IMR-90 (cell line): ENCODE measurements at regions of chr16 and their contacts with region 1.

Region 1: DNA sequence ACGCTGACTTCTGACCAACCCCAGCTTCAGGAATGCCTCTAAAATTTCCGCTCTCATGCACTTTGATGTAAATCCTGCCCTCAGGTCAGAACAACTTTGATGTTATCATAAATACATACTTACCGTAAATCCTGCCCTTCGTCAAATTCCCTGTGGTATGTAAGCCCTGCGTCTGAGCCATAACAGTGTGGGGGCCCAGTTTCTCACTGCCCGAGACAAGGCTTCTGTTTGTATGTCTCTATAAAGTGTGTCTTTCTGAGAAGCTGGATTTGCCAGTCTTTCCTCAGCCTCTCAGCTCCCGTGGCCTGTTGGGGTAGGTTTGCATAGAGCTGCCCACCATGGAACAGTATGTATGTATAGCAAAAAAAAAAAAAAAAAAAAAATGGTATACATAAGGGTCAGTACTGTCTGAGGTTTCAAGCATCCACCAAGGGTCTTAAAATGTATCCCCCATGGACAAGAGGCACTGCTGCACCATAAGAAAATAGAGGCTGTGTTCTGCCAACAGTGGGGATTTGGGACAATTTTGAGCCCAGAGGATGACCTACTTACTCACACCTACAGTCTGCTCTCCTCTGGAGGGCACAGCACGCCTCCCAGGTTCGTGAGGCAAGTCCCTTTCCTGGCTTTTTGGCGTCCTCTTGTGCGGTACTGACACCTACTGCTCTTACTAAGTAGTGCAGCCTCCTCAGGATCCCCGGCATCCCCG is 17.5 kb downstream of the PRMT7 start:
- DNase-seq: peak; percentile 83
- ATAC-seq: peak; percentile 86
- H3K4me3 ChIP-seq: no peak overlapping the region
- H3K27ac ChIP-seq: no peak overlapping the region
- H3K4me1 ChIP-seq: peaks cover 10% of the 10 kb centered on the region
- H3K27me3 ChIP-seq: no peaks in the 10 kb centered on the region
- CTCF ChIP-seq: peak; percentile 94
- POLR2A ChIP-seq: no peak; the same call in 1 of the 2 replicates
- RAD21 ChIP-seq: peak; percentile 92

Region 2: GRCh38 chr16:68085259-68086071 is 242.8 kb before region 1 on chr16 and contains the start of gene NFATC3:
- CTCF ChIA-PET with region 1: no interaction called
- POLR2A ChIA-PET with region 1: no interaction called
- dilution Hi-C with region 1: no loop called
- in situ Hi-C with region 1: no loop called
- intact Hi-C with region 1: loop called (anchors 10 kb)
- DNase-seq: peak; percentile 94
- ATAC-seq: peak; percentile 89
- H3K4me3 ChIP-seq: peak within 1 kb of the TSS; percentile 99
- H3K27ac ChIP-seq: peak within 1 kb of the TSS; percentile 95
- H3K4me1 ChIP-seq: peaks cover 12% of the 10 kb centered on the region
- H3K27me3 ChIP-seq: no peaks in the 10 kb centered on the region
- CTCF ChIP-seq: no peak
- POLR2A ChIP-seq: 0 out of 2 replicates have a peak, but pooled peaks have one; percentile 43
- RAD21 ChIP-seq: no peak
- total RNA-seq, gene NFATC3: 14.7 and 21.5 TPM in 2 replicates

Region 3: GRCh38 chr16:68128577-68129305 is 199.6 kb before region 1 on chr16:
- CTCF ChIA-PET with region 1: no interaction called
- POLR2A ChIA-PET with region 1: no interaction called
- dilution Hi-C with region 1: no loop called
- in situ Hi-C with region 1: no loop called
- intact Hi-C with region 1: no loop called
- DNase-seq: peak; percentile 4
- ATAC-seq: no peak
- H3K4me3 ChIP-seq: no peak overlapping the region
- H3K27ac ChIP-seq: no peak overlapping the region
- H3K4me1 ChIP-seq: peaks cover 2% of the 10 kb centered on the region; the same call in 1 of the 2 replicates
- H3K27me3 ChIP-seq: no peaks in the 10 kb centered on the region
- CTCF ChIP-seq: no peak
- POLR2A ChIP-seq: no peak
- RAD21 ChIP-seq: no peak

Region 4: GRCh38 chr16:68244903-68245853 is 83.1 kb before region 1 on chr16 and contains the start of gene PLA2G15:
- CTCF ChIA-PET with region 1: no interaction called
- POLR2A ChIA-PET with region 1: no interaction called
- dilution Hi-C with region 1: no loop called
- in situ Hi-C with region 1: no loop called
- intact Hi-C with region 1: loop called (anchors 1 kb)
- DNase-seq: peak; percentile 94
- ATAC-seq: peak; percentile 99
- H3K4me3 ChIP-seq: peak within 1 kb of the TSS; percentile 86
- H3K27ac ChIP-seq: peak within 1 kb of the TSS; percentile 51
- H3K4me1 ChIP-seq: peaks cover 14% of the 10 kb centered on the region
- H3K27me3 ChIP-seq: no peaks in the 10 kb centered on the region
- CTCF ChIP-seq: no peak
- POLR2A ChIP-seq: no peak
- RAD21 ChIP-seq: no peak
- total RNA-seq, gene PLA2G15: 18.1 and 19.5 TPM in 2 replicates

Region 5: GRCh38 chr16:68310761-68311511 is 17.4 kb before region 1 on chr16 and contains the starts of genes PRMT7 and SLC7A6OS:
- CTCF ChIA-PET with region 1: no interaction called
- POLR2A ChIA-PET with region 1: no interaction called
- dilution Hi-C with region 1: no loop called
- in situ Hi-C with region 1: no loop called
- intact Hi-C with region 1: loop called (anchors 2 kb)
- DNase-seq: peak; percentile 84
- ATAC-seq: peak; percentile 100
- H3K4me3 ChIP-seq: peak within 1 kb of the TSS; percentile 97
- H3K27ac ChIP-seq: peak within 1 kb of the TSS; percentile 89
- H3K4me1 ChIP-seq: peaks cover 9% of the 10 kb centered on the region
- H3K27me3 ChIP-seq: no peaks in the 10 kb centered on the region
- CTCF ChIP-seq: 0 out of 2 replicates have a peak, but pooled peaks have one; percentile 5
- POLR2A ChIP-seq: peak; percentile 85
- RAD21 ChIP-seq: no peak
- total RNA-seq, gene PRMT7: 65.5 and 68.6 TPM in 2 replicates
- total RNA-seq, gene SLC7A6OS: 8.4 and 10.3 TPM in 2 replicates